ENCODE measurements at regions of chrX and their contacts with region 1.

Region 1: DNA sequence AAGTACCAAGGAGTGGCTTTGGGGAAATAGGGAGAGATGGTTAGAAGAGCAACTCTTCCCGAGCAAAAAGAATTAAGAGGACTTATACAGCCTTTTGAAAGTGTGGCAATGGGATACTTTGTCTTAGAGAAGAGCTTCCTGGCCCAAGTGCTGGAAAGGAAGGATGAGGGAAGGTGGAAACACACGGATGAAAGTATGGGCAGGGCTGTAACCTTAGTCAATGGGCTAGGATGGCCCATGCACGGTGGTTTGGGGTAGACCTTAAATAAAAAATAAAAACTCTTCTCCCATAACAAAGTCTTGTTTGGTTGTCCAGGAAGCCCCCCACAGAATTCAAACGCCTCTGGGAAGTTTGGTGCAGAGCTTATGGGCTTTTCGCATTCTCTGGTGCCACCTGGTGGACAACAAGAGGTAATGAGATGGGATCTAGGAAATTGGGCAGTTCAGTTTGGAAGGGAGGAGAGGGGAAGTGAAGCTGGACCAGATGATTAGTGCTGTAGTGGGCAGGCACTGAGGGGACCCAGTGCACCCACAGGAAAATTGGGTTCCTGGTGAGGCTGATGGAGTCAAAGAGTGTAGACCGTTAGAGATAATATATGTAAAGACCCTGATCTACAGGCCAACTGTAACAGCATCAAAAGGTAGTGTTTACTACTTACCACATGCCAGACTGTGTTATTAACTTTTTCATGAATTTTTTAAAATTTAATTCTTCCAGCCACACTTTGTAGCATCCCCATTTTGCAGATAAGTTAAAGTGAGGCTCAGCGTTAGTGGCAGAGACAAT is 13.8 kb upstream of the ENOX2 start:
- DNase-seq: peak; percentile 46
- H3K4me3 ChIP-seq: no peak overlapping the region
- H3K27ac ChIP-seq: no peak overlapping the region
- H3K4me1 ChIP-seq: no peaks in the 10 kb centered on the region
- CTCF ChIP-seq: peak; percentile 78

Region 2: DNA sequence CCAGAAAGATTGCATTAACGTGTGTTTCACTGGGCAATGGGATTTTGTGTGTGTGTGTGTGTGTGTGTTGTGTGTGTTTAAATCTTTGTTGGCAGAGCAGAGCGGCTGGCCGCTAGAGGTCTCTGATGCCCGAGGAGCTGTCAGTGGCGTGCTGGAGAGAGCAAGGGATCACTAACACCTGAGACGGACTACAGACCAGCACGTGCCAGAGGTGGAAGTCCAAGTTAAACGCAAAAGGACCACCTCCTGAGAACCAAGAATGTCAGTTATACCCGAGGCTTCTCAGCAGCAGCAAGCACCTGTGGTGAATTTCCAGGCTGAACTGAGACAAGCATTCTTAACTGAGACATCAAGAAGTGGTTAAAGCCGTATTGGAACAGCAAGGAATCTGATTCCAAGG is 586.1 kb before region 1 on chrX:
- CTCF ChIA-PET with region 1: no interaction called
- POLR2A ChIA-PET with region 1: no interaction called
- intact Hi-C with region 1: loop called (anchors 2 kb)
- DNase-seq: peak; percentile 69
- H3K4me3 ChIP-seq: no peak overlapping the region
- H3K27ac ChIP-seq: no peak overlapping the region
- H3K4me1 ChIP-seq: no peaks in the 10 kb centered on the region
- CTCF ChIP-seq: peak; percentile 83

Region 3: GRCh38 chrX:130393451-130394074 is 523.3 kb before region 1 on chrX:
- CTCF ChIA-PET with region 1: no interaction called
- POLR2A ChIA-PET with region 1: no interaction called
- intact Hi-C with region 1: loop called (anchors 5 kb)
- DNase-seq: peak; percentile 23
- H3K4me3 ChIP-seq: no peak overlapping the region
- H3K27ac ChIP-seq: no peak overlapping the region
- H3K4me1 ChIP-seq: no peaks in the 10 kb centered on the region
- CTCF ChIP-seq: peak; percentile 68

Region 4: DNA sequence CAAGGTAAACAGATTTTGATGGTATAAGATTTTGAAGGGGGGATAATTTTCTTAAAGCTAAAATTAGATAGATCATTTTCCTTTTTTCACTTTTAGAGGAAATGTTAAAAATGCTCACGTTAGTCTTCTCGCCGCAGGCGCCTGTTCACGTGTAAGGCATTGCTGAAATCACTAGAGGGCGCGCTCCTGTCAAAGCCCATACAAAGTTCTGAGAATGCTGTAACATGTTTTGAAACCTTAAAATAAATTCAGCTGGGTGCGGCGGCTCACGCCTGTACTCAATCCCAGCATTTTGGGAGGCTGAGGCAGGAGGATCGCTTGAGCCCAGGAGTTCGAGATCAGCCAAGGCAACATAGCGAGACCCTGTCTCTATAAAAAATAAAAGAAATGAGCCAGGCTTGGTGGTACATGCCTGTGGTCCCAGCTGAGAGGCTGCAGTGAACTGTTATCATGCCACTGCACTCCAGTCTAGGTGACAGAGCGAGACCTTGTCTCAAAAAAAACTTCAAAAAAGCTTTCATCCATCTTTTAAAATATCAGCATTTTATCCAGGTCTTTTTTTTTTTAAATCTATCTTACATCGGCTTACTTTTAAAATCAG is 377.0 kb before region 1 on chrX:
- CTCF ChIA-PET with region 1: no interaction called
- POLR2A ChIA-PET with region 1: no interaction called
- intact Hi-C with region 1: loop called (anchors 2 kb)
- DNase-seq: peak; percentile 50
- H3K4me3 ChIP-seq: no peak overlapping the region
- H3K27ac ChIP-seq: no peak overlapping the region
- H3K4me1 ChIP-seq: no peaks in the 10 kb centered on the region
- CTCF ChIP-seq: peak; percentile 82

Region 5: DNA sequence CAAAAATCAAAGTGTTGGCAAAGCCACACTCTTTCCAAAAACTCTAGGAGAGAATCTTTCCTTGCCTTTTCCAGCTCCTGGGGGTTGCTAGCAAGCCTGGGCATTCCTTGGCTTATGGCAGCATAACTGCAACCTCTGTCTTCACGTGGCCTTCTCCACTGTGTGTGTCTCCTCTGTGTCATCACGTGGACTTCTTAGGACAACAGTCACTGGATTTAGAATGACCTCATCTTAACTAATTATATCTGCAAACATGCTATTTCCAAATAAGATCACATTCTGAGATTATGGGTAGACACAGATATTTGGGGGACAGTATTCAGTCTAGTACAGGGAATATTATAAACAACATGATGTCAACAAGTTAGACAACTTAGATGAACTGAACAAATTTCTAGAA is 332.7 kb before region 1 on chrX:
- CTCF ChIA-PET with region 1: no interaction called
- POLR2A ChIA-PET with region 1: no interaction called
- intact Hi-C with region 1: loop called (anchors 10 kb)
- DNase-seq: no peak
- H3K4me3 ChIP-seq: no peak overlapping the region
- H3K27ac ChIP-seq: no peak overlapping the region
- H3K4me1 ChIP-seq: no peaks in the 10 kb centered on the region
- CTCF ChIP-seq: no peak